Heart right ventricle (tissue), 16 donors: ENCODE measurements at regions of chr7 and their contacts with region 1.

Region 1: GRCh38 chr7:77954773-77955555 is 156.4 kb downstream of the PHTF2 start:
- DNase-seq: no peak
- ATAC-seq: no peak
- H3K4me3 ChIP-seq: no peak overlapping the region
- H3K27ac ChIP-seq: no peak overlapping the region
- H3K4me1 ChIP-seq: no peaks in the 10 kb centered on the region
- H3K27me3 ChIP-seq: no peaks in the 10 kb centered on the region
- CTCF ChIP-seq: no peak

Region 2: DNA sequence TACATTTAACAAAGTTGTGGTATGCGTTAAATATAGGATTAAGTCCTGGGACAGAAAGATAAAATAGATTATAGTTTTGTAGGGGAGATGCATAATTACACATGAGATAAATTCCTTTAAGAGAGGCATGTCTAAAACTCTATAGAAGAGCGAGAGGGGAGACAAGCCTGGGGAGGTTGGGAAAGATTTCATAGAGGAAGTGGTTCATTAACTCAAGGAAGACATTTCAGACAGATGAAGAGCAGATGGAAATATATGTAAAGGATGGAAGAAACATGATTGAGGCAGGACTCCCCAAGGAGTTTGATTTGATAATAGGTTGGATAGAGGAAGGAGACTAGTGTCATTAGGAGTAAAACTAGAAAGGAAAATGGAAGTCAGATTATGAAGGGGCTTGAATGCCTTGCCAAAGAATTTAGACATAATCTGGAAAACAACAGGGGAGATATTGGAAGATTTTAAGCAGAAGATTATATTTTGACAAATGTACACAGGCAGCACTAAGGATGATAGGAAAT is 60.3 kb before region 1 on chr7:
- intact Hi-C with region 1: loop called in 1 of 10 experiments (anchors 10 kb)
- DNase-seq: no peak
- ATAC-seq: no peak
- H3K4me3 ChIP-seq: no peak overlapping the region
- H3K27ac ChIP-seq: no peak overlapping the region
- H3K4me1 ChIP-seq: no peaks in the 10 kb centered on the region
- H3K27me3 ChIP-seq: no peaks in the 10 kb centered on the region
- CTCF ChIP-seq: no peak

Region 3: DNA sequence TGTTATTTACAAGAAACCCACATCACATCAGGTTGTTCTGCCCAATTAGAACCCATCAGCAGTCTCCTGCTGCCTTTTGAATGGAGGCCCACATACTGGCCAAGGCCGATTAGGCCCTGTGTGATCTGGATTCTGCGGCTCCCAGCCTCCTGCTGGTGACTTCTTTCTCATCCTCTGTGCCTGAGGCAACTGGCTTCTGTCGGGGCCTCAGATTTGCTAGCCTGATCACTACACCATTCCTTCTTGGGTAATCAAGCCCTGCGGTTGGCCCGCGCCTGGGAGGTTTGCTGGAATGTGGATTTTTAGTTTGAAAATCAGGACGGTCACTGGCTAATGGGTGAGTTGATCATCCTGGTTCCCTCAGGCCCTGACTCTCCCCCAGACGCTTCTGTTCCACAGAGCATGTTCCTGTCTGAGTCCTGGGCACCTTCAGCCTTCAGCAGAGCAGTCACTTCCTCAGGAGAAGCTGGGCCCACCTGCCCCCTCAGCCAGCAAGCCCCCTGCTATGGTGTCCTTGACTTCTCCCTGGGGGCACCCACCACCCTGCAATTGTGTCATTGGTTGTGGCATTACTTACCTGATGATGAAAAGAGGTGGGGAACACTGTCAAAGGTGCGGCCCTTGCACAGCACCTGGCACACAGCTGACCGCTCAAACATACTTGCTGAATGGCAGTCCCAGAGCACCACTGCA is 51.2 kb after region 1 on chr7:
- intact Hi-C with region 1: no loop called
- DNase-seq: no peak
- ATAC-seq: no peak
- H3K4me3 ChIP-seq: no peak overlapping the region
- H3K27ac ChIP-seq: no peak overlapping the region
- H3K4me1 ChIP-seq: no peaks in the 10 kb centered on the region
- H3K27me3 ChIP-seq: no peaks in the 10 kb centered on the region
- CTCF ChIP-seq: no peak